Naive thymus-derived CD4-positive, alpha-beta T cell (primary cell): ENCODE measurements at regions of chr17 and their contacts with region 1.

Region 1: DNA sequence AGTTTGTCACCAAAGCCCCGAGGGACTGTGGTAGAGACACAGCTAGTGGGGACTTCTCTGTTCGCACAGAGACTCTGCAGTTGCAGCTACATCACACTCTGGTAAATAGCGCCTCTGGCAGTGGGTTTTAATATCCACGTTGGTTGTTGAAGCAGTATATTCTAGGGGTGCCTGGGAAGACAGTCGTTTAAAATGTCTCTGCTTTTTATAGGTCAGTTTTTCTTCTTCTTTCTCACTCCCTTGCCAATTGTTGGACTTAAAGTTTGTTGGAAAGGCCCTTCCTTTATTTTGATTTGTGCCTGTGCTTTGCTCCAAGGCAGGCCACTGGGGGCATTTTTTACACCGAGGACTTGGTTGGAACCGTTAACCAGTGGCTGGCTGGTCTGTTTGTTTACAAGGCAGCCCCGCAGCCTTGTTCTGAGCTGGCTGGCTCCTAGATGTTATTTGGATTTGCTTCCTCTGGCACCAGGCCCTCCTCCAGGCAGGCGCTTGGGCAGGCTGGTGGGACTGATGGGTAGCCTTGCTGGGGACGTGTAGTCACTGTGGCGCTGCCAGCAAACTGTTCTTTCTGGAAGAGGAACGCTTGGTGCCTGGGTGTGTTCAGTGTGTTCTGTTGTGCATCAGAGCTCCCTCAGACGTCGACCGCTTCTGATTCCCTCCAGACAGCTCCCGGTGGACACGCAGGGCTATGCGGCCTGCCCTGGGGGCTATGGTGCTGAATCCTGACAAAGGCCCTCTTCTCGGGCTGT is 218.2 kb upstream of the CHMP6 start:
- DNase-seq: peak in 4 of 9 donors; percentile 37 to 62 (median 50)
- ATAC-seq: peak; percentile 57
- H3K4me3 ChIP-seq: no peak overlapping the region
- H3K4me3 Mint-ChIP-seq: peak overlapping the region; percentile 2 to 88 (median 70)
- H3K27ac ChIP-seq: peak overlapping the region; percentile 72
- H3K27ac Mint-ChIP-seq: peak overlapping the region; percentile 88 to 99 (median 94)
- H3K4me1 ChIP-seq: peaks cover 0 to 46% of the 10 kb centered on the region in 2 donors
- H3K4me1 Mint-ChIP-seq: peaks cover 45 to 94% (median 83%) of the 10 kb centered on the region in 7 donors
- H3K27me3 ChIP-seq: no peaks in the 10 kb centered on the region
- H3K27me3 Mint-ChIP-seq: no peaks in the 10 kb centered on the region

Region 2: DNA sequence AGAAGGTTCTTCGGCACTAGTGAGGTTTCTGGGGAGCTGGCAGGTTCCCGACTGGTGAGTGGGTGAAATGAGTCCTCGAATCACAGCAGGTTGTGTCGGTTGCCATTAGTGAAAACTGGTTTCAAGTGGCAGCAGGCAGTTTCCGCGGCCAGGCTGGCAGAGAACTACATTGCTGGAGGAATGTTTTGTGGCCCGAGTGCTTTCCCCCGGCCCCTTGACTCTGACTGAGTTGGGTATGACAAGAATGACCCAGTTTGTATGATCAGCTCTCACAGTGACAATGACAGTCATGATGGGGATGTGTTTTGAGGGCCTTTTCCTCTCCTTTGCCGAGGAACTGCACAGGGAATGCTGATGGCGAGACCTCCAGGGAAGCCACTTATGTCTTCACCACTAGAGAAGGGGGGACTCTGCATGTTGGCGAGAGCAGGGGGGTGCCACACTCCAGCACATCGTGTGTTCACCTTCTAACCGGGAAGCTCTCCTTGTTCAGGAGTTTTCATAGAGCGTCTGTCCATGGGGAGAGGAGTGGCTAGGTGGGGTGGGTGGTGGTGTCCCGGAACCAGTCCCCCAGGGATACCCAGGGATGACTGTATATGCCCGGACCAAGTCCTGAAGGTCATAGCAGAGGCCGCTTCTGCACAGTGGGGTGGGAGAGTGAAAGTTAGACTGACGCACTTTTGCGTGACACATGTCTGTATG is 12.2 kb after region 1 on chr17:
- CTCF ChIA-PET with region 1: interaction called, 8 read pairs
- POLR2A ChIA-PET with region 1: interaction called, 19 read pairs
- intact Hi-C with region 1: loop called (anchors 1 to 2 kb)
- DNase-seq: peak in 6 of 9 donors; percentile 29 to 55 (median 38)
- ATAC-seq: no peak
- H3K4me3 ChIP-seq: no peak overlapping the region
- H3K4me3 Mint-ChIP-seq: peak overlapping the region; percentile 41 to 82 (median 72)
- H3K27ac ChIP-seq: peak overlapping the region; percentile 61
- H3K27ac Mint-ChIP-seq: peak overlapping the region; percentile 88 to 99 (median 95)
- H3K4me1 ChIP-seq: peaks cover 60 to 92% of the 10 kb centered on the region in 2 donors
- H3K4me1 Mint-ChIP-seq: peaks cover 56 to 97% (median 88%) of the 10 kb centered on the region in 7 donors
- H3K27me3 ChIP-seq: no peaks in the 10 kb centered on the region
- H3K27me3 Mint-ChIP-seq: no peaks in the 10 kb centered on the region